Thyroid gland (tissue), 4 donors: ENCODE measurements at regions of chr14 and their contacts with region 1.

Region 1: GRCh38 chr14:103808403-103809001 is 38.9 kb downstream of the PPP1R13B start:
- DNase-seq: peak; percentile 83 to 90
- H3K4me3 ChIP-seq: no peak overlapping the region
- H3K27ac ChIP-seq: peak overlapping the region in 2 of 3 donors; percentile 31 to 48
- H3K4me1 ChIP-seq: peaks cover 0 to 41% of the 10 kb centered on the region in 2 donors
- H3K27me3 ChIP-seq: no peaks in the 10 kb centered on the region
- CTCF ChIP-seq: peak; percentile 75 to 95 (median 85)
- POLR2A ChIP-seq: no peak

Region 2: GRCh38 chr14:103770902-103771301 is 37.6 kb before region 1 on chr14:
- intact Hi-C with region 1: no loop called
- DNase-seq: no peak
- H3K4me3 ChIP-seq: no peak overlapping the region
- H3K27ac ChIP-seq: peak overlapping the region in 2 of 3 donors; percentile 20 to 34
- H3K4me1 ChIP-seq: peaks cover 22 to 29% of the 10 kb centered on the region in 2 donors
- H3K27me3 ChIP-seq: no peaks in the 10 kb centered on the region
- CTCF ChIP-seq: peak in 1 of 6 experiments; percentile 4
- POLR2A ChIP-seq: no peak

Region 3: GRCh38 chr14:103910262-103910935 is 101.9 kb after region 1 on chr14:
- intact Hi-C with region 1: loop called (anchors 5 kb)
- DNase-seq: peak; percentile 99
- H3K4me3 ChIP-seq: no peak overlapping the region
- H3K27ac ChIP-seq: peak overlapping the region; percentile 58 to 80 (median 78)
- H3K4me1 ChIP-seq: peaks cover 6 to 16% of the 10 kb centered on the region in 2 donors
- H3K27me3 ChIP-seq: no peaks in the 10 kb centered on the region
- CTCF ChIP-seq: peak; percentile 57 to 99 (median 90)
- POLR2A ChIP-seq: peak in 1 of 2 donors; percentile 61

Region 4: GRCh38 chr14:103973354-103973753 is 164.9 kb after region 1 on chr14:
- intact Hi-C with region 1: loop called (anchors 10 kb)
- DNase-seq: peak; percentile 61 to 68
- H3K4me3 ChIP-seq: no peak overlapping the region
- H3K27ac ChIP-seq: peak overlapping the region; percentile 30 to 86 (median 76)
- H3K4me1 ChIP-seq: peaks cover 12 to 24% of the 10 kb centered on the region in 2 donors
- H3K27me3 ChIP-seq: no peaks in the 10 kb centered on the region
- CTCF ChIP-seq: no peak
- POLR2A ChIP-seq: no peak